Kidney (tissue), 22 donors: ENCODE measurements at regions of chr6 and their contacts with region 1.

Region 1: GRCh38 chr6:56699066-56699654 is 56.5 kb upstream of the DST start:
- DNase-seq: peak in 2 of 5 donors; percentile 41 to 56
- H3K4me3 ChIP-seq: no peak overlapping the region
- H3K27ac ChIP-seq: no peak overlapping the region
- H3K4me1 ChIP-seq: no peaks in the 10 kb centered on the region
- H3K27me3 ChIP-seq: no peaks in the 10 kb centered on the region
- CTCF ChIP-seq: peak; percentile 49

Region 2: DNA sequence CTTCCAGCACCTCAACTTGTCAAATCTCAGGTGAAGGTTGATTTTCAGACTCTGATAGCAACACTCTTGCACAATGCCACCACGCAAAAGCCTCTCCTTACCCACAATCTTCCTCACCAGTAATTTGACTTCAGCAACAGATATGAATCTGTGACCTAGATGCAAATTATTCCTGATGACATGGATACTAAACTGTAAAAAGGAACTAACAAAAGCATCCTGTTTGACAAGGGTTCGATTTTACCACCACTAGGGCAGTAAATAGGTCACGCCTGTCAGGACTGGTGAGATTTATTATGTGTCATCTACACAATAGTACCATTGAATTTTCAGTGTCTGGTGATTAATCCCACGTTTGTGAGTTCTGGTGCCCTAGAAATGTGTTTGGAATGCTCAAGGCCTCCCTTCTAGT is 317.3 kb before region 1 on chr6:
- intact Hi-C with region 1: no loop called
- DNase-seq: no peak
- H3K4me3 ChIP-seq: no peak overlapping the region
- H3K27ac ChIP-seq: no peak overlapping the region
- H3K4me1 ChIP-seq: no peaks in the 10 kb centered on the region
- H3K27me3 ChIP-seq: no peaks in the 10 kb centered on the region
- CTCF ChIP-seq: no peak

Region 3: GRCh38 chr6:56637640-56638039 is 61.5 kb before region 1 on chr6:
- intact Hi-C with region 1: loop called (anchors 10 kb)
- DNase-seq: peak in 2 of 5 donors; percentile 58 to 80
- H3K4me3 ChIP-seq: no peak overlapping the region
- H3K27ac ChIP-seq: no peak overlapping the region
- H3K4me1 ChIP-seq: no peaks in the 10 kb centered on the region
- H3K27me3 ChIP-seq: no peaks in the 10 kb centered on the region
- CTCF ChIP-seq: peak; percentile 61